Lower leg skin (tissue), 4 donors: ENCODE measurements at regions of chr16 and their contacts with region 1.

Region 1: DNA sequence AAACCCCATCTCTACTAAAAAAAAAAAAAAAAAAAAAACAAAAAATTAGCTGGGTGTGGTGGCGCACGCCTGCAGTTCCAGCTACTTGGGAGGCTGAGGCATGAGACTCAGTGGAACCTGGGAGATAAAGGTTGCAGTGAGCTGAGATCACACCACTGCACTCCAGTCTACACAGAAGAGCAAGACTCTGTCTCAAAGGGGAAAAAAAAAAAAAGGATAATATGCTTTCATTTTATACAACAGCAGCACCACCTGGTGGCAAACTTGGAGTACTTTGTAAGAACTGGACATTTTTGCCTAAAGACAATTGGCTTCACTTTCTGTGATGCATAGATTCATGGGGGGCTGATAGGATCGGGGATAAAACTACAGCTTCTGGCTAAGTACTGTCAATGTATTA is 8.5 kb downstream of the CHTF8 start:
- DNase-seq: peak in 1 of 2 donors; percentile 77
- H3K4me3 ChIP-seq: no peak overlapping the region
- CTCF ChIP-seq: no peak
- POLR2A ChIP-seq: no peak

Region 2: GRCh38 chr16:67660564-67661028 is 1463.3 kb before region 1 on chr16 and contains the start of gene PARD6A:
- intact Hi-C with region 1: no loop called
- DNase-seq: peak; percentile 90 to 98
- H3K4me3 ChIP-seq: peak within 1 kb of the TSS; percentile 60
- CTCF ChIP-seq: no peak
- POLR2A ChIP-seq: no peak
- total RNA-seq, gene PARD6A: 2.1 to 3.5 (median 2.4) TPM

Region 3: DNA sequence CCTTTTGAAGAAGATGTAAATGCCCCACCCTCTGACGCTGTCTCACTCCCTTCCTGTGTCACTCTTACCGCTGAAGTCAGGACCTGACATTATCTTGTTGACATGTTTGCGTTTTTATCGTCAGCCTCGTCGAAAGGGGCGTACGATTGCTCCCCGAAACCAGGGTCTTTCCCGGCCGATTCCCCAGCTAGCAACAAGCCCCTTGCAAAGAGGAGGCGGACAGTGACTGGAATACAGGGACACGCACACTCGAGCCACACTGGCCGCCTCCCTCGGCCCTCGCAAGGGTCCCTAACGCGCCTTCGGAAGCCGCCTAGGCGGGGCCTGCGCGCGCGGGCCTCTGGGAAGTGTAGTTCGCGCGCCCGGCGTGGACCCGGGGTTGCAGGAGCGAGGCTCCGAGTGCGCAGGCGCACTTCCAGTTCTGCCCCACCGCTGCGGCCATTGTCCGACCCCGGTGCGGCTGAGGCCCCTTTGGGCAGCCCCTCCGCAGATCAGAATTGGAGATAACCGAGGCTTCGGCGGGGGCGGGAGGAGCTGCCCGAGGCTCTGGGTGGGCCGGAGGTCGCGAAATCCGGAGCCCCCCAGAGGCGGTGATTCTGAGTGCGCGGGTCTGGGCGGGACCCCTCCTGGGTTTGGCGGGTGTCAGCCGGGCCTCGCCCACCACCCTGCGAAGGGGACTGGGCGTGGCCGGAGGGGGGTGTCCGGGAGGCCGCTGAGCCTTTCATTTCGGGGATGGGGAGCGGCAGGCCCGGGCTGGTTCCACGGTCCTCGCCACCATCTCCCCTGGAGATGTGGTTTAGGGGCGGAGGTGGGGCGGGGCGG is 584.8 kb before region 1 on chr16 and contains the start of gene ZFP90:
- intact Hi-C with region 1: loop called (anchors 10 kb)
- DNase-seq: peak; percentile 69 to 97
- H3K4me3 ChIP-seq: peak within 1 kb of the TSS; percentile 92
- CTCF ChIP-seq: no peak
- POLR2A ChIP-seq: no peak
- total RNA-seq, gene ZFP90: 14.5 to 32.6 (median 18.5) TPM

Region 4: GRCh38 chr16:68843482-68844210 is 280.3 kb before region 1 on chr16 and contains the start of gene TANGO6:
- intact Hi-C with region 1: loop called (anchors 10 kb)
- DNase-seq: peak; percentile 64 to 97
- H3K4me3 ChIP-seq: peak within 1 kb of the TSS; percentile 90
- CTCF ChIP-seq: no peak
- POLR2A ChIP-seq: no peak
- total RNA-seq, gene TANGO6: 7.9 to 17.0 (median 8.6) TPM

Region 5: GRCh38 chr16:68902008-68902968 is 221.6 kb before region 1 on chr16:
- intact Hi-C with region 1: loop called (anchors 10 kb)
- DNase-seq: peak; percentile 35 to 53
- H3K4me3 ChIP-seq: no peak overlapping the region
- CTCF ChIP-seq: no peak
- POLR2A ChIP-seq: no peak

Region 6: DNA sequence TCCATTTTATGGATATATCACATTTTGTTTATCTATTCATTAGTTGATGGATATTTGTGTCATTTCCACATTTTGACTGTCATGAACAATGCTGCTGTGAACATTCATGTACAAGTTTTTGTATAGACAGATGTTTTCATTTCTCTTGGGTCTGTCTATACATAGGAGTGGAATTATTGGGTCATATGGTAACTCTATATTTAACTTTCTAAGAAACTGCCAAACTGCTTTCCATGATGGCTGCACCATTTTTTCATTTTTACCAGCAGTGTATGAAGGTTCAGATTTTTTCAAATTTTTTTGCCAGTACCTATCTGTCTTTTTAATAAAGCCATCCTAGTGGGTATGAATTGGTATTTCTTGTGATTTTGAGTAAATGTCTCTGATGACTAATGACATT is 457.4 kb after region 1 on chr16:
- intact Hi-C with region 1: no loop called
- DNase-seq: no peak
- H3K4me3 ChIP-seq: no peak overlapping the region
- CTCF ChIP-seq: no peak
- POLR2A ChIP-seq: no peak